Calu3 (cell line): ENCODE measurements at regions of chr7 and their contacts with region 1.

Region 1: GRCh38 chr7:35424869-35425495 is 171.1 kb upstream of the TBX20 start:
- DNase-seq: peak; percentile 84
- H3K4me3 Mint-ChIP-seq: no peak overlapping the region
- H3K27ac Mint-ChIP-seq: no peak overlapping the region
- H3K4me1 Mint-ChIP-seq: no peaks in the 10 kb centered on the region
- H3K27me3 Mint-ChIP-seq: peaks cover 29% of the 10 kb centered on the region
- CTCF ChIP-seq: peak; percentile 85

Region 2: DNA sequence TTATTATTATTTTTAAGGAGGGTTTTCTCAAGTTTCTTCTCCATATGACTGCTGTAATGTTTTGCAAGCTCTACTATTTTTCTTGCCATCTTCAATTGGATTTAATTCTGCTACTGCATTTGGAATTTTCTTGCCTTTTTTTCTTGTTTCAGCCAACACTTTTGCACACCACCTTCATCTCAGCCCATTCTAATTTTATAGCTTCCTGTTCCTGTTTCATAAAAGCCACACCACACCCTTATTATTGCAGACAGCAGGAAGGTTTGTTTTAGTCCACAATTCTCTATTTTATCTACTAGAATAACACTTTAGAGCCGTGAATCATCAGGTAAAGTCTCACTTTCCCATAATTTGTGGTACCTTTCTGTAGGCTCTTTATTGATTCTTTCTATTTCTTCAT is 38.2 kb after region 1 on chr7:
- CTCF ChIA-PET with region 1: no interaction called
- intact Hi-C with region 1: loop called (anchors 5 kb)
- DNase-seq: no peak
- H3K4me3 Mint-ChIP-seq: no peak overlapping the region
- H3K27ac Mint-ChIP-seq: peak overlapping the region; percentile 47
- H3K4me1 Mint-ChIP-seq: peaks cover 14% of the 10 kb centered on the region
- H3K27me3 Mint-ChIP-seq: peaks cover 18% of the 10 kb centered on the region
- CTCF ChIP-seq: no peak

Region 3: DNA sequence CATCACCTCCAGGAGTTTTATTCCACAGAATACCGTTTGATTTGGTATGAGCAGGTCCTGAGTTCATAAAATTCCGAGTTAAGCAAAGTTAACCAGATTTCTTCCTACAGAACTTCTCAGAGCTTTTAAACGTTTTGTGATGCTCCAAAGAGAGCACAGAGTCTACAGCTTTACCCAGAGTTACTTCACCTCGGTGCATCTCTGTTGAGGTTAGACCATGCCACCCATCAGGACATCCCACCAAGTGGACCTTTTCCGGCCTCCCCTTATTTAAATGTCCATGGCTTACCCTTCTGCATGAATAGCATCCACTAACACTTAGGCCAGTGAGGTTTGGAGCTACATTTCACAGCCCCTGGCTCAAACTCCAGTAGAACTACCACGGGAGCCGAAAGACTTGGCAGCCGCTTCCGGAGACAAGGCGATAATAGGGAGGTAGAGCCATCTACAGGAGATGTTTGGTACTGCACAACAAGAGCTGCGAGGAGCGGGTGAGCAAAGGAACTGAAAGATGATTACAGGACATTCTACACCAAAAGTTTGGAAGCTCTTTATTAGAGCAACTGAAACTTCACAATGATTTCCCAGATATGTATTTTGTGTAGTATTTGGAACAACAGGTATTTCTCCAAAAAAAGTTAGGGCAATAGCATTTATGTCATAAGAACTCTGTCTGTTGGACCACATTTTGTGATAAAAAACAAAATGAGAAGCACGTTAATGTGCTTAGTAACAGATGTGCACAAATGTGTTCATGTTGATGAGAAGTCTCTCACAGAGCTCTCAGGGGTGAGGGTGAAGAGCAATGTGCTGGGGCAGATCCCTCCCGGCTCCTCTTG is 95.2 kb after region 1 on chr7:
- CTCF ChIA-PET with region 1: interaction called, 77 read pairs
- intact Hi-C with region 1: loop called (anchors 1 kb)
- DNase-seq: peak; percentile 86
- H3K4me3 Mint-ChIP-seq: no peak overlapping the region
- H3K27ac Mint-ChIP-seq: no peak overlapping the region
- H3K4me1 Mint-ChIP-seq: no peaks in the 10 kb centered on the region
- H3K27me3 Mint-ChIP-seq: peaks cover 87% of the 10 kb centered on the region
- CTCF ChIP-seq: peak; percentile 98

Region 4: DNA sequence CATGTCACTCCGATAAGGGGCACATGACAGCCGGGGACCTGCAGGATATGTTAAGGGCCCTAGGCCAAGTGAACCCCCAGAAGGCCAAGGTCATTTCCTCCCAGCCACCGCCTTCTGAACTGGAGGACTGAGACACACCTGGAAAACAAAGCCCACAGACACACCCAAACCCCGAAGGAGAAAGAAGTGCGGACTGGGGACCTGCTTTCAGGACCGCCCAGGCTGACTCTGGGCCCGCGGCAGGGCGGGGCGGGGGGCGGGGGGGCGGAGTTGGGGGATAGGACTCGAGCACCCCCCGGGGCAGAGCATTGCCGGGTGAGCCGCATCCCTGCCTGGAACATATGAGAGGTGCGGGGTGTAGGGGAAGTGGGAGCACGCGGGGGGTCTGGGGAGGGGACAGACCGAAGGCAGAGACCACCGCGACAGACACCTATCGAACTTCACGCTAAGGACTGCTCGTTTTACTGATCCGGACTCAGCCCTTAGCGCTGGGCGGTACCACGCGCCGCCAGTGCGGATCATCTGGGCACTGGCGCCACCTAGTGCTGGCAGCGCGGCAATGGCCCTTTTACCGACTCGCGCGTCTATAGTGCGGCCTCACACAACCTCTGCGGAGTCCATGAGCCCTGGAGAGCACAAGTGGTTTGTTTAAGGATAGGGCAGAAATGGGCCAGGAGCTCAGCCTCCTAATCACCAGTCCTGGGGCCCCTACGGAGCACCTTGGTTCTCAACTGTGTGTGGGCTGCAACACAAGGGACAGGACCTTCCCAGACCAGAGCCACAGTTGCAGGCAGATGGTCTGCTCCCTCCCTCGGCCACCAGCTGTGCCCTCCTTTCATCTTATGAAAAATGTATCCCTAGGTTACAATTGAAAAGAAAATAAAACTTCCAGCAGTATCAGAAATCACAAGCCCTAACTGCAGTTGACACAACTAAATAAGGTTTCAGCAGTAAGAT is 112.4 kb after region 1 on chr7:
- CTCF ChIA-PET with region 1: interaction called, 3 read pairs
- intact Hi-C with region 1: loop called (anchors 1 kb)
- DNase-seq: peak; percentile 89
- H3K4me3 Mint-ChIP-seq: peak overlapping the region; percentile 58
- H3K27ac Mint-ChIP-seq: no peak overlapping the region
- H3K4me1 Mint-ChIP-seq: no peaks in the 10 kb centered on the region
- H3K27me3 Mint-ChIP-seq: peaks cover 54% of the 10 kb centered on the region
- CTCF ChIP-seq: peak; percentile 98

Region 5: GRCh38 chr7:35576031-35576573 is 151.1 kb after region 1 on chr7:
- CTCF ChIA-PET with region 1: no interaction called
- intact Hi-C with region 1: no loop called
- DNase-seq: no peak
- H3K4me3 Mint-ChIP-seq: no peak overlapping the region
- H3K27ac Mint-ChIP-seq: no peak overlapping the region
- H3K4me1 Mint-ChIP-seq: no peaks in the 10 kb centered on the region
- H3K27me3 Mint-ChIP-seq: peaks cover 71% of the 10 kb centered on the region
- CTCF ChIP-seq: no peak

Region 6: DNA sequence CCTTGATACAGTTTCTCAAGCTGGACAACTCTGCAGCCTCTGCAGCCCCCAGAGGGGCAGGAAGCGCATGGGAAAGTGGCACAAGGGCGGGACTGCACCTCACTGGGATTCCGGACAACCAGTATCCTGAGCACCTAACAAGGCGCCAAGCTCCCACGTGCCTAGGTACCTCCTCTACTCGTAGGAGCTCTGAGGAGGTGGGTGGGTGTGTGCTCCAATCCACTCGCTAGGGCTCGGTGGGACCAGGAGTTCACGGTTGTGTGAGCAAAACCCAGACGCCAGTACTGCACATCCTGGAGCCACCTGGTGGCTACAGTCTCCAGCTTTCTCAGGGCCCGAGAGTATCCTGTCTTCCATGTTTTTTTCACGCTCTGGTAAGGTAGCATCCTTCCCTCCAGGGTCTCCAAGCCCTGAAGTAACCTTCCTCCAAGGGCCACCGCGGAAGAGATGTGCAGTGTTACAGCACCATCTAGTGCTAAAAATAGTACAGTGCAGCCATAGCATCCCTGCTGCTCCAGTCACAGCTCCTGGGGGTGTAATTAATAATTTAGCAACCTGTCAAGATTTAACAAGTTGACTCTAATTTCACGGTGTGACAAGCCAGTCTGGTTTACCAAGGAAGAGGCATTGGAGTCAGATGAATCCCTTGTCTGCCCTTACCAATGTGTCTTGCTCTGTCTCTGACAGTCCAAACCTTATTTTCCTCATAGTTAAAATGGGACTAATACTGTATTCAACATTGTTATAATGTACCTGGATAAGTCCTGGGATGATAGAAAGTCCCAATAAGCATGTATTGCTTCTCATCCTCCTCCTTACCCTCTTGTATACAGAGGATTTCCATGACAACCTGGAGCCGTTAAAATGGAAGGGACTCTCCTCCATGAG is 199.6 kb after region 1 on chr7:
- CTCF ChIA-PET with region 1: interaction called, 9 read pairs
- intact Hi-C with region 1: loop called (anchors 1 kb)
- DNase-seq: peak; percentile 68
- H3K4me3 Mint-ChIP-seq: no peak overlapping the region
- H3K27ac Mint-ChIP-seq: no peak overlapping the region
- H3K4me1 Mint-ChIP-seq: no peaks in the 10 kb centered on the region
- H3K27me3 Mint-ChIP-seq: no peaks in the 10 kb centered on the region
- CTCF ChIP-seq: peak; percentile 86